Activated naive CD4-positive, alpha-beta T cell treated with anti-CD3 and anti-CD28 coated beads for 36 hours (primary cell): ENCODE measurements at regions of chr12 and their contacts with region 1.

Region 1: DNA sequence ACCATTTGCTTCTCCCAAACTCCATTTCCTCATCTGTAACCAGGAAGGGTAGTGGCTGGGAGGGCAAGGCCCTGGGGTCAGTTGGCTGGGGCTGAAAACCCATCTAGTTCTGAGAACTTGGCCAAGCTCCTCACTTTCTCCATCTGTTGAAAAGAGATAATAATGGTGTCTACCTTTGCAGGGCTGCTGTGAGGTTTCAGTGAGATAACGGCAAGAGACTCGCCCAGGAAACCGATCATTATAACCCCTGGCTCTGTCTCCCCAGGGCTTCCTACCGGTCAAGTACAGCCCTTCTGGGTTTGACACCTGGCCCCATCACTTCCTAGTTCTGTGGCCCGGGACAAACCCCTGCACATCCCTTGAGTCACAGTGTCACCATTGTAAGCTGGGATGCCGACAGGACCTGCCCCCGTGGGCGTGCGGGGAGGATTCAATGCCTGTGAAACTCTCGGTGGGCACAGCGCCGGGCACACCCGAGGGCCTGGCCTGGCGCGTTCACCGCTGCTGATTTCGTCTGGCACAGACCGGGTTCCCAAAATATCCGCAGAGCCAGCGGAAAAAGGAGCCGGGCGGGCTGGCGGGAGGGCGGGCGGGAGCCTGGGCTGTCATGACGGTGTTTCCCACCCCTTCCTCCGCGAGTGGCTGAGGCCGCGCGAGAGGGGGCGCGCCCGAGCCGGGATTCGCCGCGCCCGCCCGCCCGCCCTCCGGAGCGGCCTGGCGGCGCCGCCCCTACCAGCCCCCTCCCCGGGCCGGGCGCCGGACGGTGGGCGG is 4.4 kb downstream of the KMT5A start:
- DNase-seq: peak; percentile 85
- H3K4me3 Mint-ChIP-seq: peak overlapping the region; percentile 80
- H3K27ac Mint-ChIP-seq: peak overlapping the region; percentile 81
- H3K4me1 Mint-ChIP-seq: peaks cover 31% of the 10 kb centered on the region
- H3K27me3 Mint-ChIP-seq: no peaks in the 10 kb centered on the region

Region 2: GRCh38 chr12:123271001-123271729 is 117.2 kb before region 1 on chr12:
- CTCF ChIA-PET with region 1: no interaction called
- intact Hi-C with region 1: loop called (anchors 1 kb)
- DNase-seq: peak; percentile 81
- H3K4me3 Mint-ChIP-seq: no peak overlapping the region
- H3K27ac Mint-ChIP-seq: no peak overlapping the region
- H3K4me1 Mint-ChIP-seq: peaks cover 23% of the 10 kb centered on the region
- H3K27me3 Mint-ChIP-seq: no peaks in the 10 kb centered on the region

Region 3: GRCh38 chr12:123329799-123330198 is 58.6 kb before region 1 on chr12:
- CTCF ChIA-PET with region 1: no interaction called
- intact Hi-C with region 1: no loop called
- DNase-seq: no peak
- H3K4me3 Mint-ChIP-seq: no peak overlapping the region
- H3K27ac Mint-ChIP-seq: no peak overlapping the region
- H3K4me1 Mint-ChIP-seq: no peaks in the 10 kb centered on the region
- H3K27me3 Mint-ChIP-seq: no peaks in the 10 kb centered on the region

Region 4: GRCh38 chr12:123457980-123458783 is 69.8 kb after region 1 on chr12 and contains the start of gene SNRNP35:
- CTCF ChIA-PET with region 1: no interaction called
- intact Hi-C with region 1: loop called (anchors 1 kb)
- DNase-seq: peak; percentile 83
- H3K4me3 Mint-ChIP-seq: peak within 1 kb of the TSS; percentile 97
- H3K27ac Mint-ChIP-seq: peak within 1 kb of the TSS; percentile 100
- H3K4me1 Mint-ChIP-seq: peaks cover 25% of the 10 kb centered on the region
- H3K27me3 Mint-ChIP-seq: no peaks in the 10 kb centered on the region
- total RNA-seq, gene SNRNP35: 21.5 to 21.8 TPM

Region 5: GRCh38 chr12:123601602-123602489 is 213.5 kb after region 1 on chr12 and contains the start of gene DDX55:
- CTCF ChIA-PET with region 1: no interaction called
- intact Hi-C with region 1: loop called (anchors 5 kb)
- DNase-seq: peak; percentile 87
- H3K4me3 Mint-ChIP-seq: peak within 1 kb of the TSS; percentile 89
- H3K27ac Mint-ChIP-seq: peak within 1 kb of the TSS; percentile 94
- H3K4me1 Mint-ChIP-seq: peaks cover 45% of the 10 kb centered on the region
- H3K27me3 Mint-ChIP-seq: no peaks in the 10 kb centered on the region
- total RNA-seq, gene DDX55: 44.8 to 48.7 TPM

Region 6: GRCh38 chr12:124917135-124917840 is 1528.9 kb after region 1 on chr12:
- CTCF ChIA-PET with region 1: no interaction called
- intact Hi-C with region 1: loop called (anchors 5 kb)
- DNase-seq: peak; percentile 98
- H3K4me3 Mint-ChIP-seq: peak overlapping the region; percentile 73
- H3K27ac Mint-ChIP-seq: peak overlapping the region; percentile 100
- H3K4me1 Mint-ChIP-seq: peaks cover 83% of the 10 kb centered on the region
- H3K27me3 Mint-ChIP-seq: peaks cover 6% of the 10 kb centered on the region